ENCODE measurements at regions of chr2 and their contacts with region 1.

Region 1: DNA sequence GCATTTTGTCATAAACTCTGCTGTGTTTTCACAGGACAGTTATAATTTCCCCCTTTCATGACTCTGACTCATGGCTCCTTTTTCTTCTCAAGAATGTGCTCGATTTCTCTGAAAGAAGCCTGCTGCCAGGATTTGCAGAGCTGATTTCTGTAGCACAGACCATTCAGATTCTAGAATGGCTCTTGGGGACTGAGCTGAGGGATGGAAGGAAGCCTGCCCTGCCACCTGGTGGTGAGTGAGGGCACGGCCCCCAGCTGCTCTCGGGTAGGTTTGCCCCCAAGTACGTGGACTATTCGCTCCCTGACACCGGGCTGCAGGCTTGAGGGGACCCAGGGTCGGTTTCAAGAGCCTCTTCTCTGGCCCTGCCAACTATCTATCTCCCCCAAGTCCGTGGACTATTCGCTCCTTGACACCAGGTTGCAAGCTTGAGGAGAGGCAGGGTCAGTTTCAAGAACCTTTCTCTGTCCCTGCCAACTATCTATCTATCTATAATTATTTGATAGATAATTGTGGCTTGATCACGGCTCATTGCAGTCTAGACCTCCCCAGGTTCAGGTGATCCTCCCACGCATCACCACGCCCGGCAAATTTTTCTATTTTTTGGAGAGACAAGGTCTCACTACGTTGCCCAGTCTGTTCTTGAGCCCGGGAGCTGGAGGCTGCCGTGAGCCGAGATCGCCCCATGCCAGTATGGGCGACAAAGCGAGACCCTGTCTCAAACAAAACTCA is 1.4 kb upstream of the SMYD5 start:
- DNase-seq: peak; percentile 77
- H3K4me3 ChIP-seq: no peak overlapping the region
- H3K27ac ChIP-seq: no peak overlapping the region
- H3K4me1 ChIP-seq: peaks cover 9% of the 10 kb centered on the region
- H3K27me3 ChIP-seq: peaks cover 0 to 5% of the 10 kb centered on the region in 2 experiments
- CTCF ChIP-seq: peak; percentile 96 to 99
- POLR2A ChIP-seq: no peak

Region 2: GRCh38 chr2:72908741-72909140 is 303.9 kb before region 1 on chr2:
- CTCF ChIA-PET with region 1: no interaction called
- POLR2A ChIA-PET with region 1: no interaction called
- dilution Hi-C with region 1: no loop called
- intact Hi-C with region 1: no loop called
- DNase-seq: no peak
- H3K4me3 ChIP-seq: no peak overlapping the region
- H3K27ac ChIP-seq: no peak overlapping the region
- H3K4me1 ChIP-seq: no peaks in the 10 kb centered on the region
- H3K27me3 ChIP-seq: peaks cover 47 to 81% of the 10 kb centered on the region in 2 experiments
- CTCF ChIP-seq: no peak
- POLR2A ChIP-seq: no peak

Region 3: GRCh38 chr2:73187549-73187948 is 25.1 kb before region 1 on chr2:
- CTCF ChIA-PET with region 1: interaction called, 11 read pairs
- POLR2A ChIA-PET with region 1: no interaction called
- dilution Hi-C with region 1: no loop called
- intact Hi-C with region 1: no loop called
- DNase-seq: no peak
- H3K4me3 ChIP-seq: no peak overlapping the region
- H3K27ac ChIP-seq: no peak overlapping the region
- H3K4me1 ChIP-seq: no peaks in the 10 kb centered on the region
- H3K27me3 ChIP-seq: peaks cover 25 to 35% of the 10 kb centered on the region in 2 experiments
- CTCF ChIP-seq: no peak
- POLR2A ChIP-seq: no peak

Region 4: DNA sequence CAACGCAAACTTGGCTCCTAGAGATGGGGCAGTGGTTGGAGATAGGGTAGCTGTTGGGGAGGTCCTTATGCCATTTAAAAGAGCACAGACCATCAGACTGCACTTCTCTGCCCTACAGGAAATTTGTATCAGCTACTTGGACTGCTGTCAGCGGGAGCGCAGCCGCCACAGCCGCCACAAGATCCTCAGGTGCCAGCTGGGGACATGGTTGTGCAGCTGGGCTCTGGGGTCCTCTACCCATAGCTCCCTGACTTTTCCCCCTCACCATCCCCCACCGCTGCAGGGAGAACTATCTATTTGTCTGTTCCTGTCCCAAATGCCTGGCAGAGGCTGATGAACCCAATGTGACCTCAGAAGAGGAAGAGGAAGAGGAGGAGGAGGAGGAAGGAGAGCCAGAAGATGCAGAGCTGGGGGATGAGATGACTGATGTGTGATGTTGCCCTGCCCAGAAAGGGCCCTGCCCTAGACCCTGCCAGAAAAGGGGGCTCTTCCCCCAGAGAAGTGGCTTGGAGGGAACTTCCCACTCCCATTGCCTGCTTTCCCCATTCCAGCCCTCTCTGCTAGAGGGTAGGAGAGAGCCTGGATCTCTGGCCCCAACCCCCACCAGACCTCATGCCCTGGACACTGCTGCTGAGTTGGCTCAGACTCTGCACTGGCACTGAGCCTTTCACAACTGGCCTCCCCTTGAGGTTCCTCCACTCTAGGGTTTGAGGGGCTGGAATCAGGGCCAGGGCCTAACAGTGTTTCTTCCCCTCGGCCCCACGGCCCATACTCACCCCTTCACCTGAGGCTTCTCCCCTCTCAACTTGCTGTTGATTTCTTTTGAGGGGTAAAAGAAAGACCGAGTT is 13.1 kb after region 1 on chr2:
- CTCF ChIA-PET with region 1: interaction called, 11 read pairs
- POLR2A ChIA-PET with region 1: no interaction called
- dilution Hi-C with region 1: no loop called
- intact Hi-C with region 1: no loop called
- DNase-seq: no peak
- H3K4me3 ChIP-seq: no peak overlapping the region
- H3K27ac ChIP-seq: no peak overlapping the region
- H3K4me1 ChIP-seq: no peaks in the 10 kb centered on the region
- H3K27me3 ChIP-seq: no peaks in the 10 kb centered on the region
- CTCF ChIP-seq: no peak
- POLR2A ChIP-seq: no peak

Region 5: GRCh38 chr2:73233154-73233931 is 20.7 kb after region 1 on chr2 and contains the start of gene PRADC1:
- CTCF ChIA-PET with region 1: interaction called, 19 read pairs
- POLR2A ChIA-PET with region 1: interaction called, 3 read pairs
- dilution Hi-C with region 1: no loop called
- intact Hi-C with region 1: loop called (anchors 1 kb)
- DNase-seq: peak; percentile 100
- H3K4me3 ChIP-seq: peak within 1 kb of the TSS; percentile 76 to 90 (median 85)
- H3K27ac ChIP-seq: peak within 1 kb of the TSS; percentile 84
- H3K4me1 ChIP-seq: peaks cover 21% of the 10 kb centered on the region
- H3K27me3 ChIP-seq: no peaks in the 10 kb centered on the region
- CTCF ChIP-seq: no peak
- POLR2A ChIP-seq: no peak
- total RNA-seq, gene PRADC1: 19.6 and 21.8 TPM in 2 replicates

Measured in endothelial cell of umbilical vein (primary cell).